ENCODE measurements at regions of chr22 and their contacts with region 1.

Region 1: GRCh38 chr22:37781479-37781911 is 26.2 kb upstream of the GCAT start:
- DNase-seq: no peak
- H3K4me3 ChIP-seq: no peak overlapping the region
- H3K27me3 ChIP-seq: no peaks in the 10 kb centered on the region; the same call in 1 of the 2 replicates
- CTCF ChIP-seq: peak; percentile 31; the same call in 1 of the 2 replicates

Region 2: DNA sequence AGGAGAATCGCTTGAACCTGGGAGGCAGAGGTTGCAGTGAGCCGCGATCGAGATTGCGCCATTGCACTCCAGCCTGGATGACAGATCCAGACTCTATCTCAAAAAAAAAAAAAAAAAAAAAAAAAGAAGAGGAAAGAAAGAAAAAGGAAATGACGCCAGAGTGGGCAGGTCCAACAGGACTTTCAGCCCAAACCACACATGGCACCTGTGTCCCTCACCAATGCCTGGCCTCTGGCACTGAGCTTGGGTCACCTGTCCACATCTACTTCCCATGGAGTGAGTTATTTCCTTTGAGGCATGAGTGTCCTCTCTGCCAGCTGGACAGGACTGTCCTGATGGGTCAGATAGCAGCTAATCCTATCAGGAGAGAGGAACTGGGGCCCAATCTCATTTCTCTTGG is 11.0 kb after region 1 on chr22:
- CTCF ChIA-PET with region 1: interaction called, 26 read pairs
- POLR2A ChIA-PET with region 1: no interaction called
- DNase-seq: no peak
- H3K4me3 ChIP-seq: no peak overlapping the region
- H3K27me3 ChIP-seq: no peaks in the 10 kb centered on the region
- CTCF ChIP-seq: no peak

Region 3: DNA sequence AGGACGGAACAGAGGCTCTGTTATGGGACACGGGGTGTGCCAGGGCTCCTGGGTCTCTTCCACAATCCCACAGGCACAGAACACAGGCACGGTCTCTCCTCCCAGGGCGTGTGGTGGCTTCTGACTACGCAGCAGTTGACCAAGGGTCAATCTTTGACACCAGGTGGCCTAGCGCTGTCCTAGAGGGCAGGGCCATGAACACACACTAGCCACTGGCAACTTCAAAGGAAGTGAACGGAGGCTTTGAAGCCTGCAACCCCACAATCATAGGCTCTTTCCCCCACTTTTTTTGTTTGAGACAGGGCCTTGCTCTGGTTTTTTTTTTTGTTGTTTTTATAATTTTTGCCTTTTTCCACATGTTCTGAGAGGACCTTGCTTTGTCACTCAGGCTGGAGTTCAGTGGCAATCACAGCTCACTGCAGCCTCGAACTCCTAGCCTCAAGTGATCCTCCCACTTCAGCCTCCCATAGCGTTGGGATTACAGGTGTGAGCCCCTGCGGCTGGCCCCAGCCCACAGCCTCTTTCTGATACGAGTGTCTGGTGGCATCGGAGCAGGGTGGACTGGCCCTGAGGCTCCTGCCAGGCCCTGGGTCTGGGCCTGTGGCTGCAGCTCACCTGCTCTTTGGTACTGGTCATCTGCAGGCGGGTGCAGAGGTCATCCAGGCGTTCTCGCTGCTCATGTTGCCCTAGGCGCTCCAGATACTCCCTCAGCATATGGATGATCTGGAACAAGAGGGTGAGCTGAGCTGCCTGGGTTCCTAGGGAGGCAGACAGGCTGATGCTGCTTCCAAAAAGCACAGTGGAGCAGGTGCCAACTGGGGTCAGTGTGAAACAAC is 50.7 kb after region 1 on chr22:
- CTCF ChIA-PET with region 1: no interaction called
- POLR2A ChIA-PET with region 1: no interaction called
- DNase-seq: no peak
- H3K4me3 ChIP-seq: no peak overlapping the region
- H3K27me3 ChIP-seq: no peaks in the 10 kb centered on the region
- CTCF ChIP-seq: no peak

Measured in BJ (cell line).